ENCODE measurements at regions of chr13 and their contacts with region 1.

Region 1: DNA sequence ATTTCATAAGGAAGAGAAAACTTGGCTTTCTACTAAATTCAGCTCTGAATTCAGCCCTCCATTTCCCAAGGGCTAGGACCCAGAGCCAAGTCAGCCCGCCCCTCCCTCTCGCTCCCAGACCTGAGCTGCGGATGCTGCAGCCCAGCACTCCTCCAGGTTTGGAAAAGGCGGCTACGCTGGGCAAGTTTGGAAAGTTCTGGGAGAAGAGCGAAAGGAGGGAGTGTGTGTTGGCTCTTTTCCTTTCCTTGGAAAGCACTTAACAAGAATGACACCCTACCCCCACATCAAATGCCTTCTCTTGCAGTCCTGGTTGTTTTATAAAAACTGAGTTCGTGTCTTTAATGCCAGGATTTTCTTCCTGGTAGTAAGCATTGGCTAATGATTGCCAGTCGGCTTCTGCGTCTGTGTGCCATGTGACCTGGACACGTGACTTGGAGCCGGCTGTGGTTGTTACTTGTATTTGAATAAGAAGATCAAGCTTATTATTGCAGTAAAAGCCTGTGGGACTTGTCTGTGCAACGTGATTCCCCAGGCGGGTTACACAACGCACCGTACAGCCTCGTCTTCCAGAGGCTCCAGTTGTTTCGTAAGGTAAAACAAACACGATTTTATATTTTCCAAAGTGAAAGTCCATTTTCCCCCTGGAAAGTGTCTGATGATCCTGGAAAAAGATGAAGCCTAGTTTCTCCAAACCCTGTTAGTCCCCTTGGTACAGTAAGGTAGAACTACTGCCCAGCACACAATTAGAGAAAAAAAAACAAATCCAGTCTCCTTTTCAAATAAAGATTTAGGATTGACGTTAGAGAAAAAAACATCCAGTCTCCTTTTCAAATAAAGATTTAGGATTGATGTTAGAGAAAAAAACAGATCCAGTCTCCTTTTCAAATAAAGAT is 26.9 kb upstream of the UBE2L5 start:
- DNase-seq: peak; percentile 99
- H3K4me3 ChIP-seq: peak overlapping the region; percentile 38 to 49
- H3K27ac ChIP-seq: peak overlapping the region; percentile 95 to 96
- H3K4me1 ChIP-seq: no peaks in the 10 kb centered on the region
- H3K27me3 ChIP-seq: no peaks in the 10 kb centered on the region
- CTCF ChIP-seq: no peak
- POLR2A ChIP-seq: peak; percentile 52

Region 2: GRCh38 chr13:30303269-30303668 is 92.2 kb before region 1 on chr13:
- intact Hi-C with region 1: no loop called
- DNase-seq: no peak
- H3K4me3 ChIP-seq: no peak overlapping the region
- H3K27ac ChIP-seq: no peak overlapping the region
- H3K4me1 ChIP-seq: no peaks in the 10 kb centered on the region
- H3K27me3 ChIP-seq: no peaks in the 10 kb centered on the region
- CTCF ChIP-seq: no peak
- POLR2A ChIP-seq: no peak

Region 3: DNA sequence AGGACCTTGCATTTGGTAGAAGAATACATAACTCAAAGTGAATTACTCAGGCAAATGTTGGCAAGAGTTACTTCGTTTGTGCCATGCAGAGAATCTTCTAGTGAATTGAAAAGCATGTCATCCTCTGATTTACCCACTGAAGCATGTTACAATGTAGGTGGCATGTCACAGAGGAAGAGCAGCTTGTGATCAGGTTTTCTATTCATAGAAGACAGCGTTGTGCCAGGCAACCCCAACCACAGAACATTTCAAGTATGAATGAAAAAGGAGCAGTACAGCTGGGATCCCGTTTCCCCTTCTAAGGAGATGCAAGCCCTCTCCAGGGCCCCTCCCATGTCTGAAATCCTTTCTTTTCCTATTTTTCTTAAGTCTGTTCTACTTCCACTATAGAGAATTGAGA is 82.1 kb before region 1 on chr13:
- intact Hi-C with region 1: loop called (anchors 2 kb)
- DNase-seq: no peak
- H3K4me3 ChIP-seq: no peak overlapping the region
- H3K27ac ChIP-seq: no peak overlapping the region
- H3K4me1 ChIP-seq: no peaks in the 10 kb centered on the region
- H3K27me3 ChIP-seq: no peaks in the 10 kb centered on the region
- CTCF ChIP-seq: no peak
- POLR2A ChIP-seq: no peak

Measured in prostate gland (tissue), 2 donors.